ENCODE measurements at regions of chr9 and their contacts with region 1.

Region 1: GRCh38 chr9:75088260-75088905 is at the start of gene OSTF1:
- DNase-seq: peak; percentile 97
- H3K4me3 ChIP-seq: peak within 1 kb of the TSS; percentile 76 to 96 (median 95)
- H3K27ac ChIP-seq: peak within 1 kb of the TSS; percentile 94 to 99 (median 99)
- H3K4me1 ChIP-seq: peaks cover 36 to 48% of the 10 kb centered on the region in 2 donors
- H3K27me3 ChIP-seq: no peaks in the 10 kb centered on the region
- CTCF ChIP-seq: no peak
- POLR2A ChIP-seq: peak; percentile 85 to 97
- total RNA-seq, gene OSTF1: 34.7 to 36.6 (median 35.6) TPM

Region 2: GRCh38 chr9:74589576-74589975 is 498.8 kb before region 1 on chr9:
- intact Hi-C with region 1: no loop called
- DNase-seq: no peak
- H3K4me3 ChIP-seq: no peak overlapping the region
- H3K27ac ChIP-seq: no peak overlapping the region
- H3K4me1 ChIP-seq: no peaks in the 10 kb centered on the region
- H3K27me3 ChIP-seq: no peaks in the 10 kb centered on the region
- CTCF ChIP-seq: no peak
- POLR2A ChIP-seq: no peak

Region 3: GRCh38 chr9:75027187-75028107 is 60.9 kb before region 1 on chr9:
- intact Hi-C with region 1: loop called (anchors 10 kb)
- DNase-seq: peak; percentile 70 to 71
- H3K4me3 ChIP-seq: peak overlapping the region; percentile 64 to 93 (median 83)
- H3K27ac ChIP-seq: peak overlapping the region; percentile 89 to 98 (median 89)
- H3K4me1 ChIP-seq: peaks cover 11 to 16% of the 10 kb centered on the region in 2 donors
- H3K27me3 ChIP-seq: no peaks in the 10 kb centered on the region
- CTCF ChIP-seq: no peak
- POLR2A ChIP-seq: no peak

Measured in thyroid gland (tissue), 4 donors.